Activated naive CD4-positive, alpha-beta T cell treated with anti-CD3 and anti-CD28 coated beads for 36 hours (primary cell): ENCODE measurements at regions of chr15 and their contacts with region 1.

Region 1: DNA sequence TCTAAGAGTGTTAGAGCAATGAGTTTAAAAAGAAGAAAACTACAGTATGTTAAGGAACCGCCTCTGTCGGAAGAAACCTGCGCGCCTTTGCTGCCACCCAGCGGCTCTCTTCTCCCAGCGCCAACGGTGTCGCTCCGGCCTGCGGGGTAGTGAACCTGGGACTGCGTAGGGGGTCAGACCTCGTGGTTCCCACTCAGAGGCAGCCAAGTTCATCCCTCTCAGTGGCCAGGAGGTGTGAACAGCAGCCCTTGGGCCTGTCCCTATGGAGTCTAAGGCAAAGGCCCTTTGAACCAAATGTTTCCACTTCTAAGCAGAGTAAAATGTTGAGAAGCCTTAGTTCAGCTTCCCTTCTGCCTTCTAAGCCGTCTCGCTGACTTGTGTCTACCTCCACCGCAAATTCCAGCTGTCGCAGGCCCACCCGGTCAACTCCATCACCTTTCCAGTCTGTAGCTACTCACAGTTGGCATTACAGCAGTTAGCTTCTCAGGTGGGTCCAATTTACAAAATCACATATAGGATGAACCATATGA is 980 bp upstream of the RAB27A start:
- DNase-seq: peak; percentile 90
- H3K4me3 Mint-ChIP-seq: peak overlapping the region; percentile 80
- H3K27ac Mint-ChIP-seq: peak overlapping the region; percentile 91
- H3K4me1 Mint-ChIP-seq: peaks cover 29% of the 10 kb centered on the region
- H3K27me3 Mint-ChIP-seq: no peaks in the 10 kb centered on the region

Region 2: GRCh38 chr15:53808058-53808706 is 1482.4 kb before region 1 on chr15:
- CTCF ChIA-PET with region 1: no interaction called
- intact Hi-C with region 1: loop called (anchors 5 kb)
- DNase-seq: no peak
- H3K4me3 Mint-ChIP-seq: no peak overlapping the region
- H3K27ac Mint-ChIP-seq: no peak overlapping the region
- H3K4me1 Mint-ChIP-seq: peaks cover 2% of the 10 kb centered on the region
- H3K27me3 Mint-ChIP-seq: peaks cover 2% of the 10 kb centered on the region

Region 3: DNA sequence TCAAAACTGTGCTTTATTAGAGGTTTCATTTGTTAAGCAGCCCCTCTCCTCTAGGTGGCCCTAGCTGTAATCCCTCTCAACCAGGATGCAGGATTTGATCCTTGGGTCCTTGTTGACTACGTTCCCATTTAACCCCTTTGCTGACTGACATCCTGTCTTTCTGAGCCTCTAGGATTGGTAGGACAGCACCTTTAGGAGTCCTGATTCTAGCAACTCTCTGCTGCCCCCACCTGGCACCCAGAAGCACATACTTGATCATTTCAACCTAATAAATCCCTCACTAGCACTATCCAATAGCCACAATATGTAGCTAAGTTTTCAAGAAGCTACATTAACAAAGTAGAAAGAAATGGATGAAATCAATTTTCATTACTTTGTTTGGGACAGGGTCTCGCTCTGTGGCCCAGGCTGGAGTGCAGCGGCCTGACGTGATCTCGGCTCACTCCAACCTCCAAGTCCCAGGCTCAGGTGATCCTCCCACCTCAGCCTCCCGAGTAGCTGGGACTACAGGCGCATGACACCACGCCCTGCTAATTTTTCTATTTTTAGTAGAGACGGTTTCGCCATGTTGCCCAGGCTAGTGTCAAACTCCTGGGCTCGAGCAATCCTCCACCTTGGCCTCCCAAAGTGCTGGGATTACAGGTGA is 122.1 kb before region 1 on chr15:
- CTCF ChIA-PET with region 1: interaction called, 3 read pairs
- intact Hi-C with region 1: loop called (anchors 1 kb)
- DNase-seq: peak; percentile 75
- H3K4me3 Mint-ChIP-seq: no peak overlapping the region
- H3K27ac Mint-ChIP-seq: no peak overlapping the region
- H3K4me1 Mint-ChIP-seq: no peaks in the 10 kb centered on the region
- H3K27me3 Mint-ChIP-seq: no peaks in the 10 kb centered on the region

Region 4: GRCh38 chr15:55241891-55242290 is 48.7 kb before region 1 on chr15:
- CTCF ChIA-PET with region 1: interaction called, 4 read pairs
- intact Hi-C with region 1: loop called (anchors 1 kb)
- DNase-seq: no peak
- H3K4me3 Mint-ChIP-seq: no peak overlapping the region
- H3K27ac Mint-ChIP-seq: peak overlapping the region; percentile 79
- H3K4me1 Mint-ChIP-seq: peaks cover 75% of the 10 kb centered on the region
- H3K27me3 Mint-ChIP-seq: no peaks in the 10 kb centered on the region

Region 5: DNA sequence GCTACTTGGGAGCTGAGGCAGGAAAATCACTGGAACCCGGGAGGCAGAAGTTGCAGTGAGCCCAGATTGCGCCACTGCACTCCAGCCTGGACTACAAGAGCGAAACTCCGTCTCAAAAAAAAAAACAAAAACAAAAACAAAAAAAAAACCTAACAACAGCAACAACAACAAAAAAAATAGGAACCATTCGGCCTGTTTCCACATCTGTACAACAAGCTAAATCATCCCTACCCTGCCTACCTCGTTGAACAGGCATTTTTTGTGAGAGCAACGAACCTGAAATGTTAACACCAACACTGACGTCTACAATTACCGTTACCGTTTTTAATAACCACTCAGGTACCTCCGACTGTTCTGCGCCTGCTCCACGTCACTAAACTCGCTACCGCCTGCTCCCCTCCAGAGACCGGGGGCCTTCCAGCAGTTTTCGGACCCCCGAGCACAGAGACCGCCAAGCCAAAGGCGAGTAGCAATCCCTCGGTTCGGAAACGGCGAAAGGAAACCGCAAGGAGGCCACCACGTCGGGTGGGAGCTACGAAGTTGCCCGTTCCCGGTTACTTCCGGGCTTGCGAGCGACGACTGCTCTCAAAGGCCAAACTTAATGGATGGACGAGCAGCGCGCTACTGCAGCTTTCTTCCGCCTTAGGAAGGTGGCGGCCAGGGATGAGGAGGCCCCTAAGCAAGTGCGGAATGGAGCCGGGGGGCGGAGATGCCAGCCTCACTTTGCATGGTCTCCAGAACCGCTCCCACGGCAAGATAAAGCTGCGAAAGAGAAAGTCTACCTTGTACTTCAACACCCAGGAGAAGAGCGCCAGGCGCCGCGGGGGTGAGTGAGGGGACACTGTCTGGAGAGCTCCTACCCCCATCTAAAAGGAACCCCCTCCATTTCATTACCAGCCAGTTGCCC is 28.2 kb after region 1 on chr15 and contains the starts of genes PIGB and PIGBOS1:
- CTCF ChIA-PET with region 1: interaction called, 3 read pairs
- intact Hi-C with region 1: loop called (anchors 1 kb)
- DNase-seq: peak; percentile 86
- H3K4me3 Mint-ChIP-seq: peak within 1 kb of the TSS; percentile 98
- H3K27ac Mint-ChIP-seq: peak within 1 kb of the TSS; percentile 93
- H3K4me1 Mint-ChIP-seq: peaks cover 51% of the 10 kb centered on the region
- H3K27me3 Mint-ChIP-seq: no peaks in the 10 kb centered on the region
- total RNA-seq, gene PIGB: 13.3 to 13.8 TPM
- total RNA-seq, gene PIGBOS1: 7.3 to 9.2 TPM

Region 6: GRCh38 chr15:55357774-55358173 is 67.2 kb after region 1 on chr15:
- CTCF ChIA-PET with region 1: no interaction called
- intact Hi-C with region 1: no loop called
- DNase-seq: no peak
- H3K4me3 Mint-ChIP-seq: no peak overlapping the region
- H3K27ac Mint-ChIP-seq: no peak overlapping the region
- H3K4me1 Mint-ChIP-seq: no peaks in the 10 kb centered on the region
- H3K27me3 Mint-ChIP-seq: no peaks in the 10 kb centered on the region

Region 7: GRCh38 chr15:56040081-56041035 is 749.8 kb after region 1 on chr15:
- CTCF ChIA-PET with region 1: no interaction called
- intact Hi-C with region 1: loop called (anchors 10 kb)
- DNase-seq: peak; percentile 73
- H3K4me3 Mint-ChIP-seq: no peak overlapping the region
- H3K27ac Mint-ChIP-seq: peak overlapping the region; percentile 79
- H3K4me1 Mint-ChIP-seq: peaks cover 64% of the 10 kb centered on the region
- H3K27me3 Mint-ChIP-seq: no peaks in the 10 kb centered on the region